Activated CD8-positive, alpha-beta T cell treated with anti-CD3 and anti-CD28 coated beads for 36 hours (primary cell): ENCODE measurements at regions of chr15 and their contacts with region 1.

Region 1: GRCh38 chr15:45457641-45458433 is 64.7 kb downstream of the SLC30A4 start:
- DNase-seq: peak; percentile 88
- ATAC-seq: peak; percentile 70
- H3K4me3 Mint-ChIP-seq: peak overlapping the region; percentile 78
- H3K27ac Mint-ChIP-seq: peak overlapping the region; percentile 87
- H3K4me1 Mint-ChIP-seq: peaks cover 43% of the 10 kb centered on the region
- H3K27me3 Mint-ChIP-seq: no peaks in the 10 kb centered on the region
- CTCF ChIP-seq: peak; percentile 99

Region 2: DNA sequence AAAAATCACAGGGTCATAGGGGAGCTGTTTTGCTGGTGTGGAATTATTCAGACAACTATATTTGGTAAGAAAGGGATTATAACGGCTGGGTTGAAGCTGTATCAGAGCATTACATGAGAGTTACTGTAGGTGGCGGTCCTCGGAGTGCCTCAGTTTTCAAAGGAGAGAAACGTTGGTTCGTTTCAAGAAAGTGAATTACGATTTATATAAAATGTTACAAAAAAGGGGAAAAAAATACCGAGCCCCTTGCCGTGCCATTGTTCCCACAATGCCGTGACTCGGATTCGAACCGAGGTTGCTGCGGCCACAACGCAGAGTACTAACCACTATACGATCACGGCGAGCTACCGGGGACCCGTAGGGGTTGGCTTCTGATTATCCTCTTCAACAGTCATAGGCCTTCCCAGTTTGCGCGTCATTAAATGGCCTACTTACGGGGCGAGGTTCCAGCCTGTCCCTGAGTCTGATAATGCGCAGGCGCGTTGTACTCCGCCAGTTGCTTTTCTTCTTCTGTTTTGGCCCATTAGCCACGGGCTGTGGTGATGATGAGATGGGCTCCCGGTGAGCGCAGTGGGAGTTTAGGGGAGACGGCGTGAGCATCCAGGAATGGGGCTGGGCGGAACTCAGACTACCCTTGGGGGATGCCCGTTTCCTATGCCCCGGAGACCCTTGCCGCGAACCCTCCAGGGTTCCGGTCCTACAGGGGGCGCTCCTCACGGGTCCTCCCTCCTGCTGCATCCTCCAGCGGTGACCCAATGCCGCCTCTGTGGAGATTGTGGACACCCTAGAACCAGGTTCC is 259.3 kb before region 1 on chr15:
- CTCF ChIA-PET with region 1: interaction called, 12 read pairs
- POLR2A ChIA-PET with region 1: no interaction called
- intact Hi-C with region 1: no loop called
- DNase-seq: peak; percentile 95
- ATAC-seq: peak; percentile 66
- H3K4me3 Mint-ChIP-seq: no peak overlapping the region
- H3K27ac Mint-ChIP-seq: no peak overlapping the region
- H3K4me1 Mint-ChIP-seq: peaks cover 8% of the 10 kb centered on the region
- H3K27me3 Mint-ChIP-seq: peaks cover 3% of the 10 kb centered on the region
- CTCF ChIP-seq: peak; percentile 68

Region 3: GRCh38 chr15:45414215-45414885 is 43.5 kb before region 1 on chr15:
- CTCF ChIA-PET with region 1: interaction called, 11 read pairs
- POLR2A ChIA-PET with region 1: no interaction called
- intact Hi-C with region 1: no loop called
- DNase-seq: no peak
- ATAC-seq: no peak
- H3K4me3 Mint-ChIP-seq: no peak overlapping the region
- H3K27ac Mint-ChIP-seq: peak overlapping the region; percentile 53
- H3K4me1 Mint-ChIP-seq: peaks cover 17% of the 10 kb centered on the region
- H3K27me3 Mint-ChIP-seq: no peaks in the 10 kb centered on the region
- CTCF ChIP-seq: no peak

Region 4: DNA sequence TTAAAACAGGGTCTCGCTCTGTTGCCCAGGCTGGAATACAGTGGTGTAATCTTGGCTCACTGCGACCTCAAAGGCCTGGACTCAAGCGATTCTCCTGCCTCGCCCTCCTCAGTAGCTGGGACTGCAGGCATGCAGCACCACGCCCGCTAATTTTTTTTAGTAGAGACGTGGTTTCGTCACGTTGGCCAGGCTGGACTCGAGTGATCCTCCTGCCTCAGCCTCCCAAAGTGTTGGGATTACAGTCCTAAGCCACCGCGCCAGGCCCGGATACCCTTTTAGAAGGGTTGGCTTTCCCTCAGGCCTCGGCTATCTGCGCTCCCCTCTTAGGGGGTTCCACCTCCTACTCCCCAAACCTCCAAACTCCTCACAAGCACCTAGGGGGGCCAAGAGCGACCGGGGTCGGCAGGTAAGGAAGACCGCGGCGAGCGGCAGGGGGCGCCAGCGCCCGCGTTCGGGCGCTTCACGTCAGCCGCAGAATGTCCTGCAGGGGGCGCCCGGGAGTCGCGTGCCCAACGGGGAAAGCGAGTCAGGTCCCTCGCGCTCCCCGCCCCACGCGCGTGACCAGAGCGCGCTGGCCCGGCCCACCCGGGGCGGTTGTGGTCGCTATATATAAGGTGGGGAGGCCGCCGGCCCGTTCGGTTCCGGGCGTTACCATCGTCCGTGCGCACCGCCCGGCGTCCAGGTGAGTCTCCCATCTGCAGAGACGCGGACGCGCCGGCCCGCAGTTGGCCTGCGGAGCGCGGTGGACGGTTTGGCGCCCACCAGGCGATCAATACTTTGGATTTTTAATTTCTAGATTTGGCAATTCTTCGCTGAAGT is 27.7 kb before region 1 on chr15:
- CTCF ChIA-PET with region 1: interaction called, 159 read pairs
- POLR2A ChIA-PET with region 1: interaction called, 4 read pairs
- intact Hi-C with region 1: loop called (anchors 1 kb)
- DNase-seq: peak; percentile 87
- ATAC-seq: peak; percentile 96
- H3K4me3 Mint-ChIP-seq: peak overlapping the region; percentile 38
- H3K27ac Mint-ChIP-seq: no peak overlapping the region
- H3K4me1 Mint-ChIP-seq: peaks cover 2% of the 10 kb centered on the region
- H3K27me3 Mint-ChIP-seq: peaks cover 9% of the 10 kb centered on the region
- CTCF ChIP-seq: peak; percentile 100

Region 5: GRCh38 chr15:45473068-45473467 is 15.2 kb after region 1 on chr15:
- CTCF ChIA-PET with region 1: interaction called, 10 read pairs
- POLR2A ChIA-PET with region 1: interaction called, 3 read pairs
- intact Hi-C with region 1: no loop called
- DNase-seq: no peak
- ATAC-seq: no peak
- H3K4me3 Mint-ChIP-seq: no peak overlapping the region
- H3K27ac Mint-ChIP-seq: no peak overlapping the region
- H3K4me1 Mint-ChIP-seq: no peaks in the 10 kb centered on the region
- H3K27me3 Mint-ChIP-seq: peaks cover 19% of the 10 kb centered on the region
- CTCF ChIP-seq: no peak

Region 6: DNA sequence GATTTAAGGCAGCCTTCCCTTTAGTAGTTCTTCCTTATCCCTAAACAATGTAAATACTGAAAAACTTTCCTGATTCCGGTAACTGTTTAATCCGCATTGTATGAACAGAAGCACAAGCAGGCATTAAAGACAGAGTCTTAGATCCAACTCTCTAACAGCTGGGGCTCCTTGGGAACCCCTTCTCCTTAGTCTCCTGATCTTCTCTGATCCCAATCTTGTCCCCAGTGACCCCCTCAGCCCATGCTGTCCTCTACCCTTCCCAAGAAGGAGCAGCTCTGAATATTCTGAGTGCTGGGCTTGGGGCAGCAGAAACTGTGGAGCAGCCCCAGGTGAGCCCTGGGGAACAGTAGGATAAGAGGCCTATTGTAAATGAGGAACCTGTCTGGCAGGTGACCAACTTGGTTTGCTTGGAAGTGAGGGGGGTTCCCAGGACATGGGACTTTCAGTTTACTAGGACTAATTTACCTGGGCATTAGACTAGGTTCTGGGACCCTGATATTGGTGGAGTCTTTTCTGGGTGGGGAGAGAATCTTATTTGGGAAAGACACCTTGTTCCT is 77.7 kb after region 1 on chr15:
- CTCF ChIA-PET with region 1: no interaction called
- POLR2A ChIA-PET with region 1: no interaction called
- intact Hi-C with region 1: no loop called
- DNase-seq: no peak
- ATAC-seq: no peak
- H3K4me3 Mint-ChIP-seq: no peak overlapping the region
- H3K27ac Mint-ChIP-seq: no peak overlapping the region
- H3K4me1 Mint-ChIP-seq: no peaks in the 10 kb centered on the region
- H3K27me3 Mint-ChIP-seq: peaks cover 2% of the 10 kb centered on the region
- CTCF ChIP-seq: no peak

Region 7: GRCh38 chr15:45604326-45604725 is 146.5 kb after region 1 on chr15:
- CTCF ChIA-PET with region 1: interaction called, 11 read pairs
- POLR2A ChIA-PET with region 1: interaction called, 3 read pairs
- intact Hi-C with region 1: no loop called
- DNase-seq: no peak
- ATAC-seq: no peak
- H3K4me3 Mint-ChIP-seq: no peak overlapping the region
- H3K27ac Mint-ChIP-seq: peak overlapping the region; percentile 36
- H3K4me1 Mint-ChIP-seq: peaks cover 6% of the 10 kb centered on the region
- H3K27me3 Mint-ChIP-seq: no peaks in the 10 kb centered on the region
- CTCF ChIP-seq: no peak

Region 8: GRCh38 chr15:45616901-45617323 is 159.1 kb after region 1 on chr15:
- CTCF ChIA-PET with region 1: interaction called, 92 read pairs
- POLR2A ChIA-PET with region 1: interaction called, 4 read pairs
- intact Hi-C with region 1: loop called (anchors 1 kb)
- DNase-seq: no peak
- ATAC-seq: no peak
- H3K4me3 Mint-ChIP-seq: no peak overlapping the region
- H3K27ac Mint-ChIP-seq: no peak overlapping the region
- H3K4me1 Mint-ChIP-seq: no peaks in the 10 kb centered on the region
- H3K27me3 Mint-ChIP-seq: no peaks in the 10 kb centered on the region
- CTCF ChIP-seq: no peak